ENCODE measurements at regions of chr5 and their contacts with region 1.

Region 1: GRCh38 chr5:115309751-115310370 is 13.4 kb upstream of the CCDC112 start:
- DNase-seq: no peak
- H3K4me3 ChIP-seq: no peak overlapping the region
- H3K27ac ChIP-seq: no peak overlapping the region
- H3K4me1 ChIP-seq: no peaks in the 10 kb centered on the region
- H3K27me3 ChIP-seq: peaks cover 0 to 7% (median 0%) of the 10 kb centered on the region in 4 donors
- CTCF ChIP-seq: peak; percentile 72 to 75 (median 74)
- EP300 ChIP-seq: no peak
- POLR2A ChIP-seq: no peak

Region 2: GRCh38 chr5:115377468-115378217 is 67.8 kb after region 1 on chr5:
- intact Hi-C with region 1: loop called (anchors 5 kb)
- DNase-seq: peak; percentile 79
- H3K4me3 ChIP-seq: peak overlapping the region in 2 of 4 donors; percentile 5 to 13
- H3K27ac ChIP-seq: peak overlapping the region in 1 of 4 donors; percentile 40
- H3K4me1 ChIP-seq: peaks cover 10 to 14% (median 11%) of the 10 kb centered on the region in 4 donors
- H3K27me3 ChIP-seq: no peaks in the 10 kb centered on the region
- CTCF ChIP-seq: peak; percentile 44 to 58 (median 58)
- EP300 ChIP-seq: no peak
- POLR2A ChIP-seq: no peak

Region 3: GRCh38 chr5:115586601-115587048 is 276.8 kb after region 1 on chr5:
- intact Hi-C with region 1: loop called (anchors 2 kb)
- DNase-seq: no peak
- H3K4me3 ChIP-seq: no peak overlapping the region
- H3K27ac ChIP-seq: no peak overlapping the region
- H3K4me1 ChIP-seq: peaks cover 0 to 35% (median 10%) of the 10 kb centered on the region in 4 donors
- H3K27me3 ChIP-seq: no peaks in the 10 kb centered on the region
- CTCF ChIP-seq: peak; percentile 60 to 62 (median 60)
- EP300 ChIP-seq: no peak
- POLR2A ChIP-seq: no peak

Region 4: GRCh38 chr5:115831163-115831768 is 521.4 kb after region 1 on chr5:
- intact Hi-C with region 1: loop called (anchors 10 kb)
- DNase-seq: no peak
- H3K4me3 ChIP-seq: no peak overlapping the region
- H3K27ac ChIP-seq: no peak overlapping the region
- H3K4me1 ChIP-seq: peaks cover 0 to 8% (median 3%) of the 10 kb centered on the region in 4 donors
- H3K27me3 ChIP-seq: no peaks in the 10 kb centered on the region
- CTCF ChIP-seq: peak; percentile 60 to 80 (median 64)
- EP300 ChIP-seq: no peak
- POLR2A ChIP-seq: no peak